Activated CD8-positive, alpha-beta T cell treated with anti-CD3 and anti-CD28 coated beads for 36 hours (primary cell): ENCODE measurements at regions of chr1 and their contacts with region 1.

Region 1: GRCh38 chr1:160837558-160838205 is 25.0 kb downstream of the CD244 start:
- DNase-seq: peak; percentile 92
- ATAC-seq: peak; percentile 90
- H3K4me3 Mint-ChIP-seq: peak overlapping the region; percentile 57
- H3K27ac Mint-ChIP-seq: peak overlapping the region; percentile 99
- H3K4me1 Mint-ChIP-seq: peaks cover 72% of the 10 kb centered on the region
- H3K27me3 Mint-ChIP-seq: no peaks in the 10 kb centered on the region
- CTCF ChIP-seq: peak; percentile 44

Region 2: DNA sequence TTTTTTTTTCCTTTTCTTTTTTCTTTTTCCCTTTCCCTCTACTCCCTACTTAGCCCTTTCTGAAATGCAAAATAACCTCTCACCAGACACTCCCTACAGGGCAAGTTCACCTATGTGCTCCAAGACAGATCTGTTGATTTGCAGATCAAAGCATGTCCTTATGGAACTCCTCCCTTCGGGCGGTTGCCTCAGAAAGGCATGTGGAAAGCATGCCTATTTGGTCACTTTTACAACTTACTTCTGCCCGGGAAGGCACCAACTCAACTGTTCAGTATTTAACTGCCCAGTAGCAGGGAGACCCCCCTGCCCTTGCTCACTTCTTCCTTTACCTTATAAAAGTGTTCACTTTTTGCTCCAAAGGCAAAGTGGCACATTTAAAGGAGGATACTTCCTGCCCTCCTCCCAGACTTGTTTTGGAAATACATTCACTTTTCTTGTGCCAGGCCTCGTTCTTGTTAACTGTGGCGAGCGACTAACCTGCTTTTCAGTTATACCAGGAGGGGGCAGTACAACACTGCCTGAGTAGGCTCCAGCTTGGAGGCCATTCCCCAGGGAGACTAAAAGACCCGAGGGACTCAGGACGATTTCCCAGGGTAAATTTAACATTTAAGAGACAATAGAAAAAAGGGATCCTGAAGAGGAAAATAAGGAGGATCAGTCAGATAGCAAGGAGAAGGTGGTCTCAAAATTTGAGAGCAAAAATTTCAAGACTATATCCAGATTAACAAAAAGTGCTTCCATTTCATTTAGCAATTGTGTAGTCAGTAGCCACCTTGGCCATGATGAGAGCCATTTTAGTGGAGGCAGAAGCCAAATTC is 111.0 kb before region 1 on chr1:
- CTCF ChIA-PET with region 1: interaction called, 72 read pairs
- POLR2A ChIA-PET with region 1: interaction called, 6 read pairs
- intact Hi-C with region 1: no loop called
- DNase-seq: peak; percentile 74
- ATAC-seq: peak; percentile 79
- H3K4me3 Mint-ChIP-seq: no peak overlapping the region
- H3K27ac Mint-ChIP-seq: no peak overlapping the region
- H3K4me1 Mint-ChIP-seq: peaks cover 32% of the 10 kb centered on the region
- H3K27me3 Mint-ChIP-seq: no peaks in the 10 kb centered on the region
- CTCF ChIP-seq: peak; percentile 99

Region 3: GRCh38 chr1:160806109-160806665 is 31.5 kb before region 1 on chr1:
- CTCF ChIA-PET with region 1: interaction called, 19 read pairs
- POLR2A ChIA-PET with region 1: interaction called, 4 read pairs
- intact Hi-C with region 1: no loop called
- DNase-seq: no peak
- ATAC-seq: peak; percentile 45
- H3K4me3 Mint-ChIP-seq: no peak overlapping the region
- H3K27ac Mint-ChIP-seq: peak overlapping the region; percentile 82
- H3K4me1 Mint-ChIP-seq: peaks cover 83% of the 10 kb centered on the region
- H3K27me3 Mint-ChIP-seq: no peaks in the 10 kb centered on the region
- CTCF ChIP-seq: peak; percentile 46

Region 4: GRCh38 chr1:160855181-160855981 is 17.7 kb after region 1 on chr1:
- CTCF ChIA-PET with region 1: interaction called, 39 read pairs
- POLR2A ChIA-PET with region 1: interaction called, 8 read pairs
- intact Hi-C with region 1: no loop called
- DNase-seq: peak; percentile 76
- ATAC-seq: peak; percentile 82
- H3K4me3 Mint-ChIP-seq: no peak overlapping the region
- H3K27ac Mint-ChIP-seq: no peak overlapping the region
- H3K4me1 Mint-ChIP-seq: peaks cover 14% of the 10 kb centered on the region
- H3K27me3 Mint-ChIP-seq: no peaks in the 10 kb centered on the region
- CTCF ChIP-seq: no peak

Region 5: DNA sequence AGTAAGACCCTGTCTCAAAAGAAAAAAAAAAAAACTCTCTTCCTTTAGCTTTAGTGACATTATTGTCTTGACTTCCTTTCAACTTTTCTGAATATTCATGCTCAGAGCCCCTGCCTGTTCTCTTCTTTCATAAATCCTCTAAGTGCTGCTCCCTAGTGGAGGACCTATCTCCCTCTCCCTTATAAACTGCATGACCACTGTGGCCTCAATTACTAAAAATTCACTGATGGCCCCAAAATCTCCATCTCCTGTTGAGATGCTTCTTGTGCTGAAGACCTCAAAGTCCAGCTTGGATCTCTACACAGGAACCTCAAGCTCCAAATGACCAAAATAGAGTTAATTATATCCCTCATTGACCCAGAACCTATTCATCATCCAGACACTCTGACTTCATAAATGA is 39.5 kb after region 1 on chr1:
- CTCF ChIA-PET with region 1: interaction called, 104 read pairs
- POLR2A ChIA-PET with region 1: interaction called, 10 read pairs
- intact Hi-C with region 1: loop called (anchors 1 kb)
- DNase-seq: peak; percentile 28
- ATAC-seq: peak; percentile 80
- H3K4me3 Mint-ChIP-seq: no peak overlapping the region
- H3K27ac Mint-ChIP-seq: peak overlapping the region; percentile 19
- H3K4me1 Mint-ChIP-seq: peaks cover 30% of the 10 kb centered on the region
- H3K27me3 Mint-ChIP-seq: no peaks in the 10 kb centered on the region
- CTCF ChIP-seq: peak; percentile 60

Region 6: DNA sequence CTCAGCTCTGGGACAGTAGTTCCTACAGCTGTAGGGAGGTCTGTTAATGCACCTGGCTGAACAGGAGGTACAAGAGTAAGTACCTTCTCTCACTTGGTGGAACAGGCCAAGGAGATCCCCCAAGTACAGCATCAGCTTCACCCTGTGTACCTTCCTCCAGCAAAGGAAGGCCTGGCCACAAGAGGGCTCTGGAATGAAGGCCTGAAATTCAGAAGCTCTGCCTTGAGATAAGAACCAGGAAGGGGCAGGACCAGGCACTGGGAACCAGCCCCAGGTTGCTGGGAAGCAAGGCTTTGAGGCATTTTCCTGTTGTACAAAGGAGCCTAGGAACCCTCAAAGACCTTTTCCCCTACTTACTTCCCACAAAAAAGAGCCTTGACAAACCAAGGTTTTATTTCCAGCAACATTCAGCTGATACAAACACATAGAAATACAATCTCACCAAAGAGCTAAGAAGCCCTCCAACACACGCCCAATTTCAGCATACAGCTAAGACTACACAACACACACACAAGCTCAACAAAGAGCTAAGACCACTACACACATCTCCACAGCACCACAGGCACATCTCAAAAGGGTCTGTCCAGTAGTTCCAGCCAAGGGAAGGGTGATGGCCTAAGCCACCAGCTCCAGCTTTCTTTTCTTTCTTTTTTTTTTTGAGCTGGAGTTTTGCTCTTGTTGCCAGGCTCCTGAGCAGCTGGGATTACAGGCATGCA is 159.8 kb after region 1 on chr1:
- CTCF ChIA-PET with region 1: interaction called, 15 read pairs
- POLR2A ChIA-PET with region 1: interaction called, 3 read pairs
- intact Hi-C with region 1: no loop called
- DNase-seq: peak; percentile 72
- ATAC-seq: peak; percentile 84
- H3K4me3 Mint-ChIP-seq: no peak overlapping the region
- H3K27ac Mint-ChIP-seq: peak overlapping the region; percentile 73
- H3K4me1 Mint-ChIP-seq: peaks cover 21% of the 10 kb centered on the region
- H3K27me3 Mint-ChIP-seq: no peaks in the 10 kb centered on the region
- CTCF ChIP-seq: peak; percentile 57

Region 7: DNA sequence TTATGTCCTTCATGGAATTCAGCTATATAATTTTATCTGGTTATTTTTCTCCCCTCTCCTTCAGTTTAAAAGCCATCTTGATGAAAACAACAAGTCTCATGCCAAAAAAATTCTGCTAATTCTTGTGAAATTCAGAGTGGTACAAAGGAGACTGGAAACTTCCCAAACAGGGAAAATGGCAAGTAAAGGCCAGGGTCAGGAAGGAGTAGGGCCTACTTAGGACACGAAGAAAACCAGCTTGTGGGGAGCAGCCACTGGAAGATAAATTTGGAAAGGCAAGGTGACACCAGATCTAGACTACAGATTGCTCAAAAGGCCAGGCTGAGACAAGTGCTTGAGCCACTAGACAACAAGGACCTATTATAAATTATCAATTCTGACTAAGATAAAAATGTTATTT is 194.7 kb after region 1 on chr1:
- CTCF ChIA-PET with region 1: no interaction called
- POLR2A ChIA-PET with region 1: no interaction called
- intact Hi-C with region 1: no loop called
- DNase-seq: no peak
- ATAC-seq: no peak
- H3K4me3 Mint-ChIP-seq: peak overlapping the region; percentile 7
- H3K27ac Mint-ChIP-seq: peak overlapping the region; percentile 81
- H3K4me1 Mint-ChIP-seq: peaks cover 39% of the 10 kb centered on the region
- H3K27me3 Mint-ChIP-seq: no peaks in the 10 kb centered on the region
- CTCF ChIP-seq: no peak